Dorsolateral prefrontal cortex (tissue), 120 donors: ENCODE measurements at regions of chr6 and their contacts with region 1.

Region 1: DNA sequence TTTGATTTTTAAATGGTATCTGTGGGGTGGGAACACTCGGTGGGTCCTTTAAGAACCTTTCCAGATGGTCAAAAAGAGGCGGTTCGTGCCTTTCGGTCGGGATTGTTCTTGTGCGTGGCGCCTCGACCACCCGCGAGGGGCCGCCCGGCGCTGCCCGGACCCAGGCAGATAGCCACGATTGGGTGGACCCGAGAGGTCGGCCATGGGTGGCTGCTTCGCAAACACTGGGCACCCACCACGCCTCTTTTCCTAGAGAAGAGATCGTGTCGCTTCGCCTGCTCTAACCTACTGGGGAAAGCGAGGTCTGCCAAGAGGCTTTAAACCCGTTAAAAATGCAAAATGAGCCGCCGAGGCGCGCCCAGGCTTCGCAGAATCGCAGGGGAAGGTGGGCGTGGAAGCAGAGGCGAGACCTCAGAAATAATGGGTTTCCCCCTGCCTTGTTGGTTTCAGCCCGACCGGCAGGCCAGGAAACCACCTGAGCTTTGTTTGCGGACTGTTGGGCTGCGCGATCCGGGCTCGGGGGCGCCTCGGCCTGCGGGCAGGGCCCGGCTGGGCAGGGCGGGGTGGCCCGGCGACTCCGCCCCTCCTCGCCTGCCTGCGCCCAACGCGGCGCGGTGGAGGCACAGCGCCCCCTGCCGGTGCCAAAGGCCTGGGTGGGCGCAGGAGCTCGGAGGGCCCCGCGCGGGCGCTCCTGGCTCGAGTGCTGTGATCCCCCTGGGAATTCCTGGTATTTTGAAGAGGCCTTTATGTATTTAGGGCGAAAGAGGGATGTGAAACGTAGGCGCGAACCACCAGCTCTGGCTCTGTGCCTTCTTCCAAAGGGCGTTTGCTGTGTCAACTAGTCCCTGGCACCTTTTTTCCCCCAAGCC is 1.6 kb downstream of the MARCKS start:
- DNase-seq: peak; percentile 62 to 91 (median 78)
- H3K4me3 ChIP-seq: peak overlapping the region; percentile 58 to 94 (median 81)
- H3K27ac ChIP-seq: peak overlapping the region; percentile 62 to 99 (median 95)
- H3K27me3 ChIP-seq: no peaks in the 10 kb centered on the region
- CTCF ChIP-seq: peak; percentile 76 to 100 (median 94)

Region 2: GRCh38 chr6:112780498-112781096 is 1078.1 kb before region 1 on chr6:
- intact Hi-C with region 1: loop called (anchors 2 kb)
- DNase-seq: peak; percentile 22 to 80 (median 64)
- H3K4me3 ChIP-seq: peak overlapping the region in 6 of 59 donors; percentile 0 to 26 (median 17)
- H3K27ac ChIP-seq: no peak overlapping the region
- H3K27me3 ChIP-seq: no peaks in the 10 kb centered on the region
- CTCF ChIP-seq: peak; percentile 75 to 95 (median 90)

Region 3: GRCh38 chr6:112879920-112880413 is 978.7 kb before region 1 on chr6:
- intact Hi-C with region 1: loop called in 1 of 2 experiments (anchors 1 kb)
- DNase-seq: peak in 6 of 10 donors; percentile 28 to 56 (median 41)
- H3K4me3 ChIP-seq: peak overlapping the region in 26 of 59 donors; percentile 12 to 52 (median 26)
- H3K27ac ChIP-seq: no peak overlapping the region
- H3K27me3 ChIP-seq: no peaks in the 10 kb centered on the region
- CTCF ChIP-seq: peak in 18 of 56 donors; percentile 9 to 45 (median 29)

Region 4: GRCh38 chr6:113172531-113172966 is 686.2 kb before region 1 on chr6:
- intact Hi-C with region 1: loop called in 1 of 2 experiments (anchors 5 kb)
- DNase-seq: peak; percentile 46 to 92 (median 74)
- H3K4me3 ChIP-seq: peak overlapping the region in 5 of 59 donors; percentile 1 to 43 (median 5)
- H3K27ac ChIP-seq: peak overlapping the region in 50 of 59 donors; percentile 1 to 81 (median 56)
- H3K27me3 ChIP-seq: no peaks in the 10 kb centered on the region
- CTCF ChIP-seq: peak in 6 of 56 donors; percentile 7 to 36 (median 17)

Region 5: DNA sequence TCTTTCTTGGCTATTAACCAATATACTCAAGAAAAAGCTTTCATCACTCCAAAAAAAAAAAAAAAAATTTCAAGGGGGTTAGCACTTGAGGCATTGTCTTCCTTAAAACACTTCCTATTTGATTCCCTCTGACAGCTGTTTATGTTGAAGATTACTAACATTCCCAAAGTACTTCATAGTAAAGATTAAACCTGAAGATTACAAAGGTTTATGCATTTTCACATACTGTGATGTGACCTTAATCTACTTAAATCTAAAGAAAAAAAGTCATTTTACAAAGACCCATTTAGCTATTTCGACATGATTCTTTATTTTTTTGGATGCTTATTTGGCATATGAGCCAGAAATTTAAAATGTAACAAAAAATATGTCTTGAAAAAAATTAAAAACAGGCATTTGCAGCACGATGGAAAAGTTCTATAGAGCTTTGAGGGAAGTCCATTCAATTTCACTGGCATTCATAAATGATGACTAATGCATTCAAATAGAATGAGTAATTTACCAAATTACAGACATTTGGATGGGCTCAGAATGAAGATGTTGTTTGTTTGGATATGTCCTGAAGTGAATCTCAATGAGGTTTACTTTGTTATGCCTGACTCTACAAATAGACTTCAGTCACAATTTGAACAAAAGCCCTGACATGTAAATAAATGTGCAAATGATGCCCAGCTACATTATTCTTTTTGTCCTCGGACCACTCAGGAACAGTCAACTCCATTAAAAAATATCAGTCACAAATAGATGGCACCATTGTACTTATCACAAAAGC is 676.2 kb before region 1 on chr6:
- intact Hi-C with region 1: loop called in 1 of 2 experiments (anchors 5 kb)
- DNase-seq: no peak
- H3K4me3 ChIP-seq: peak overlapping the region in 3 of 59 donors; percentile 2 to 4 (median 3)
- H3K27ac ChIP-seq: no peak overlapping the region
- H3K27me3 ChIP-seq: no peaks in the 10 kb centered on the region
- CTCF ChIP-seq: peak in 21 of 56 donors; percentile 7 to 49 (median 24)

Region 6: GRCh38 chr6:113526553-113526952 is 332.2 kb before region 1 on chr6:
- intact Hi-C with region 1: no loop called
- DNase-seq: no peak
- H3K4me3 ChIP-seq: no peak overlapping the region
- H3K27ac ChIP-seq: no peak overlapping the region
- H3K27me3 ChIP-seq: peaks cover 0 to 3% (median 0%) of the 10 kb centered on the region in 45 donors
- CTCF ChIP-seq: no peak

Region 7: DNA sequence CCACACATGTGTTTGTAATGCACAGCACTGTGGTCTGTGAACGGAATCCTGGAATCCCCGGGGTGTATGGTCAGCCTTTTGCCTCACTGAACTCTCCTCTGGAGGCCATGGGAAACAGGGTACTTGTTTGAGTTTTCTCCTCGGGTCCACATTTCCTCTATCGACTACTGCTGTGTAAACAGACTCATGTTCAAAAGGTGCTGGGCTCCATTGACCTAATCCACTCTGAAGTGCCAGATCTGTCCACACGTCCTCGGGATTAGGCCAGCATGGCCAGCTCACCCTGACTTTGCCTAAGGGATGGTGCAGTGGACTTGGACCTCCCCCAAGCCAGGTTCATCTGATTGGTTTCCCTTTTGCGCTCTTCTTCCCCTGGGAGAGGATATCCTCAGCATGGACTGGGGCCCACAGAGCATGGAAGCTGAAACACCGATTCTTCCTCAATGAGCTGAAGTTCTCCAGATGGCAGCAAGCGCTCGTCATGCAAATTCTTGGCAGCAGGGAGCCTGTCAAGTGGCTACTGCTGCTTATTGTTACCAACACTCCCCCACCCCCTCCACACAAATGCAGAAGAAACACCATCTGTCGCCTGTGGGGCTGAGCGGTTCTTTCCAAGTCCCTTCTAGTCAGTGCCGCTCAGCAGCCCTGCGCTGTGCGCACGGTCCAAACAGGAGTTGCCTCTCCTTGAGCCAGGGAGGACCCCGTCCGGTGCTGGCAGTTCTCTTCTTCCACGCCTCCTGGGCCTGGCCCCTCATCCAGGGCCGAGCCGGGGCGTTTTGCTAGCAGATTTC is 294.1 kb before region 1 on chr6:
- intact Hi-C with region 1: loop called (anchors 2 kb)
- DNase-seq: peak; percentile 55 to 94 (median 86)
- H3K4me3 ChIP-seq: peak overlapping the region; percentile 3 to 66 (median 43)
- H3K27ac ChIP-seq: peak overlapping the region in 49 of 59 donors; percentile 1 to 85 (median 64)
- H3K27me3 ChIP-seq: no peaks in the 10 kb centered on the region
- CTCF ChIP-seq: peak in 48 of 56 donors; percentile 18 to 62 (median 42)

Region 8: GRCh38 chr6:113732384-113732966 is 126.2 kb before region 1 on chr6:
- intact Hi-C with region 1: loop called in 1 of 2 experiments (anchors 5 kb)
- DNase-seq: peak in 7 of 10 donors; percentile 20 to 59 (median 42)
- H3K4me3 ChIP-seq: peak overlapping the region in 21 of 59 donors; percentile 1 to 48 (median 18)
- H3K27ac ChIP-seq: peak overlapping the region in 8 of 59 donors; percentile 2 to 48 (median 34)
- H3K27me3 ChIP-seq: peaks cover 0 to under 1% (median 0%) of the 10 kb centered on the region in 45 donors
- CTCF ChIP-seq: peak in 19 of 56 donors; percentile 8 to 45 (median 24)

Region 9: DNA sequence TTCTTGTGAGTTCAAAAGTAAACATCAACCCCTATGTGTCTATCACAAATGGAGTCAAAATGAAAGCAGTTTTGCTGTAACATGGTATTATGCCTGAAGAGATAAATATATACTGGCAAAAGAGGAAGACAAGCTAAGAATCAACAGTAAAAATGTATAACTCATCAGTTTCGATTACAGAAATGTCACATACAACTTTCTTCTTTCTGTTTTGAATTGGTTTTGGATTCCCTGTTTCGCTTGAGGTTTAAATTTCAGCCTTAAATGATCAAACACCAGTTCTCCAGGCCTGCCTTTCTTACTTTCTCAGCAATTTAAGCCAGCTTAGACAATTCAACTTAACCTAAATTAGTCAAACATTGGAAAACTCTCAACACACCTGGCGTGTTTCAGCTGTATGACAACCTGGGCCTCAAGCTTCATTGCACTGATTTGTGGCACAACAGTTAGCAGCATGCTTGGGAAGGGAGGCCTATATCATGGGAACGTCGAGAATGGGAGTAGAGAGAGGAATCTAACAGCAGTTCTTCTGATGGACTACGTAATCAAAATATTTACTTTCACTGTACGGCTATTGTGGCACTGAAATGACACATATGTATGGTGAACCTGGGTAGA is 53.4 kb before region 1 on chr6:
- intact Hi-C with region 1: no loop called
- DNase-seq: no peak
- H3K4me3 ChIP-seq: no peak overlapping the region
- H3K27ac ChIP-seq: peak overlapping the region in 12 of 59 donors; percentile 5 to 49 (median 22)
- H3K27me3 ChIP-seq: no peaks in the 10 kb centered on the region
- CTCF ChIP-seq: no peak